ENCODE measurements at regions of chr2 and their contacts with region 1.

Region 1: GRCh38 chr2:122863532-122863931 is 1108.1 kb downstream of the TSN start:
- DNase-seq: no peak
- ATAC-seq: no peak
- H3K4me3 ChIP-seq: no peak overlapping the region
- H3K27ac ChIP-seq: no peak overlapping the region
- H3K4me1 ChIP-seq: no peaks in the 10 kb centered on the region
- H3K27me3 ChIP-seq: no peaks in the 10 kb centered on the region
- CTCF ChIP-seq: no peak
- POLR2A ChIP-seq: no peak

Region 2: DNA sequence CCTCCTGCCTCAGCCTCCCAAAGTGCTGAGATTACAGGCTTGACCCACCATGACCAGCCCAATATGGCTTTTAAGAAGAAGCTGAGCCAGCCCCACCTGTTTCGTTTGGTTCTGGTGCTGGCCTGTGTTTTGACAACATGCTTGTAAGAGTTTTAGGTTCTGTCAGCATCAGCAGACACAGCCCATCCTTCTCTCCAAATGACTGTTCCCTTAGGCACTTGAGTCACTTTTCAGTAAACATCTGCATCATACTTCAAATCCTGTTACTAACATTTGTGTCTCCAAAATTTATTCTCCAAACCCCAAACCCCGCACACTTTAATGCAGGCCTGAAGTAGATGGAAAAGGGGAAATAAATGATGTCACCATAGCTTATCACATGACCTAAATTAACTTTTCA is 10.4 kb after region 1 on chr2:
- intact Hi-C with region 1: loop called in 1 of 10 experiments (anchors 2 kb)
- DNase-seq: no peak
- ATAC-seq: no peak
- H3K4me3 ChIP-seq: no peak overlapping the region
- H3K27ac ChIP-seq: no peak overlapping the region
- H3K4me1 ChIP-seq: no peaks in the 10 kb centered on the region
- H3K27me3 ChIP-seq: no peaks in the 10 kb centered on the region
- CTCF ChIP-seq: no peak
- POLR2A ChIP-seq: no peak

Region 3: GRCh38 chr2:122939796-122940195 is 76.3 kb after region 1 on chr2:
- intact Hi-C with region 1: no loop called
- DNase-seq: no peak
- ATAC-seq: no peak
- H3K4me3 ChIP-seq: no peak overlapping the region
- H3K27ac ChIP-seq: no peak overlapping the region
- H3K4me1 ChIP-seq: no peaks in the 10 kb centered on the region
- H3K27me3 ChIP-seq: no peaks in the 10 kb centered on the region
- CTCF ChIP-seq: no peak
- POLR2A ChIP-seq: no peak

Measured in heart left ventricle (tissue), 16 donors.